B cell (primary cell): ENCODE measurements at regions of chr22 and their contacts with region 1.

Region 1: GRCh38 chr22:41940832-41941765 is 5.9 kb downstream of the CENPM start:
- DNase-seq: peak; percentile 92
- ATAC-seq: peak; percentile 48
- H3K4me3 ChIP-seq: peak overlapping the region in 1 of 5 experiments; percentile 21
- H3K4me3 Mint-ChIP-seq: peak overlapping the region; percentile 96
- H3K27ac ChIP-seq: peak overlapping the region; percentile 99
- H3K27ac Mint-ChIP-seq: peak overlapping the region; percentile 99
- H3K4me1 ChIP-seq: peaks cover 50 to 62% of the 10 kb centered on the region in 2 donors
- H3K4me1 Mint-ChIP-seq: peaks cover 55% of the 10 kb centered on the region
- H3K27me3 ChIP-seq: peaks cover 0 to 5% (median 0%) of the 10 kb centered on the region in 4 experiments
- H3K27me3 Mint-ChIP-seq: no peaks in the 10 kb centered on the region
- CTCF ChIP-seq: peak; percentile 93

Region 2: DNA sequence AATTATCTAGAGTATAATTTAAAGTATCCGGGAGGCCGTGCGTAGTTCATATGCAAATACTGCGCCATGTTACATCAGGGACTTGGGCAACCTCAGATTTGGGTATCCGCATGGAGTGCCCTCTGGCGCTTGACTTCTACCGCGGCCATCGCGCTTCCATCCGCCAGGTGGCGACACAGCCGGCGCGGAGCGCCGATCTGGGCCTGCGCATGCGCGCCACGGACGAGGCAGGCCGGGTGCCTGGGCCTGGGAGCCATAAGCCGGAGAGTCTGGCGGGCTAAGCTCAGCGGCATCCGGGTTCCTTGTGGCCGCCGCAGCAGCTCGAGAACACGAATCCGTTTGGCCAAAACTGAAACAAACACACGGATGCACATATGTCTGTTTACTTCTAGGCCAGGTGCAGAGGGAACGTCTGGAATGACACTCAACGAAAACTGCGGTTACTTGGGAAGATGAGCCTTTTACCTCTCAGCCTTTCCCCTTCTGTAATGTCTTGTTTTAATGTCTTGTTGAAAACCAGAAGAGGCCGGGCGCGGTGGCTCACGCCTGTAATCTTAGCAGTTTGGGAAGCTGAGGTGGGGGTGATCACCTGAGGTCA is 274.3 kb before region 1 on chr22:
- CTCF ChIA-PET with region 1: interaction called, 11 read pairs
- POLR2A ChIA-PET with region 1: interaction called, 6 read pairs
- intact Hi-C with region 1: no loop called
- DNase-seq: peak; percentile 95
- ATAC-seq: peak; percentile 96
- H3K4me3 ChIP-seq: peak overlapping the region in 4 of 5 experiments; percentile 24 to 64 (median 44)
- H3K4me3 Mint-ChIP-seq: peak overlapping the region; percentile 90
- H3K27ac ChIP-seq: peak overlapping the region; percentile 69 to 71
- H3K27ac Mint-ChIP-seq: peak overlapping the region; percentile 98
- H3K4me1 ChIP-seq: peaks cover 0 to 13% of the 10 kb centered on the region in 2 donors
- H3K4me1 Mint-ChIP-seq: peaks cover 7% of the 10 kb centered on the region
- H3K27me3 ChIP-seq: no peaks in the 10 kb centered on the region
- H3K27me3 Mint-ChIP-seq: no peaks in the 10 kb centered on the region
- CTCF ChIP-seq: peak; percentile 98

Region 3: DNA sequence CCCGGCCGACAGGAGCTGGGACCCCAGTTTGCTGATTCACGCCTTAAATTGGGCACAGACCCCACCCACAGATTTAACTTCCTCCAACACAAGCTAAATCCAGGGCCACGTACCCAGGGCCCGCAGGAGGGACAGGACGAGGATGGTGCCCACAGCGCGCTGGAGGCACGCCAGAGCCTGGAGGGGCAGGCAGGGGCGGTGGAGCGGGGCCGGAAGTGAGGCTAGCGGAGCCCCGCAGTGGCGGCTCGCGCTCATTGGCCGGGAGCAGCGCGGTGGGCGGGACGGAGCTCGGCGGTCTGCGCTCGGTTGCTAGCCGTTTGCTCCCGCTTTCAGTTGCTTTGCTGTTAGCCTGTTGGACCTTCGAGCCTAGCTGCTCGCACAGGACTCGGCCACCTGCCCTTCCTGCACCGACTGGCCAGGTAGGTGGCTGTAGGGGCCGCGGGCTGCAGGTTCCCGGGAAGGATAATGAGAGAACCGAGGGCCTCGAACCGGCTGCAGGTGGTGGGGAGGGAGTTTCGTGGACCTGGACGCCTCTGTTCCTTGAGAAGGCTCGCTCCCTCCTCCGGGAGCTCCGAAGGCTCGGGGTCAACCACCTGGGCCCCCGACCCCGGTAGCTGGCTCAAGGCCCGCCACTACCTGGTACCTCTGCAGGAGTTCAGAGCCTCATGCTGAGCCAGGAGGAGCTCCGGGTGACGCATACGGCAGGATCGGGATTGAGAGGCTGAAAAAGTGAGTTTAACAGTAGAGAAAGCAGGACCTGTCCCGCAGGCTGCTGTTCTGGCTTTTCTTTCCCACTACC is 140.6 kb before region 1 on chr22 and contains the start of gene CCDC134:
- CTCF ChIA-PET with region 1: interaction called, 13 read pairs
- POLR2A ChIA-PET with region 1: interaction called, 9 read pairs
- intact Hi-C with region 1: loop called (anchors 1 kb)
- DNase-seq: peak; percentile 91
- ATAC-seq: peak; percentile 98
- H3K4me3 ChIP-seq: peak within 1 kb of the TSS; percentile 65 to 98 (median 96)
- H3K4me3 Mint-ChIP-seq: peak within 1 kb of the TSS; percentile 98
- H3K27ac ChIP-seq: peak within 1 kb of the TSS; percentile 90 to 91
- H3K27ac Mint-ChIP-seq: peak within 1 kb of the TSS; percentile 99
- H3K4me1 ChIP-seq: peaks cover 19 to 22% of the 10 kb centered on the region in 2 donors
- H3K4me1 Mint-ChIP-seq: peaks cover 24% of the 10 kb centered on the region
- H3K27me3 ChIP-seq: no peaks in the 10 kb centered on the region
- H3K27me3 Mint-ChIP-seq: no peaks in the 10 kb centered on the region
- CTCF ChIP-seq: no peak
- total RNA-seq, gene CCDC134: 17.4 and 18.1 TPM in 2 replicates

Region 4: DNA sequence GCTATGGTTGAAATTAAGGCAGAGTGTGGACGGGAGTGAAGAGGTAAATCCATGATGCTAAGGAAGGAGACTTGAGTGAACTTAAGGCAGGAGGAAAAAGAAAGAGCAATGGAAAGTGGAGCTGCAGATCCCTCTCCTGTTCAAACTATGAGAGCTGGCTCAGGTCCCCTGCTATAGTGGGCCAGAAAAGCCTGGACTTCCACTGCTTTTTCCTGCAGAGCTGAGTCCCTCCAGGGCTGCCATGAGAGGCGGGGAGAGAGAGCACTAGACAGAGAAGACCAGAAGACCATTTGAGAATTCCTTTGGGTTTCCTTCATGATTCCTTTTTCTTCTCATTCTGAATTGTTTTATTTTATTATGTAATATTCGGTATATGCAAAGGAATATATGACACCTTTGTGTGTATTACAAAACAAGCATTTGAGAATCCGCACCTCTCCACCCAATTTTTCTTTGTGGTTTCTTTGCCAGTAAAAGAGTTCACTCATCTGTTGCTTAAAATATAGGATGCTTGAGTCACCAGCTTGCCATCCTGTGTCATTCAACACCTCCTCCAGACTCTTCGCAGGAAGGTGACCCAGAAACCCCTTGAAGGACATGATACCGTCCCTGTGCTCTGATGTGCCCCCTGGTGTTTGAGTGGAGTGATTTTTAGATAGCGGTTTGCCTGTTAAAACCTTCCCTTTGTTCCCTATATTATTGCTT is 83.8 kb before region 1 on chr22:
- CTCF ChIA-PET with region 1: interaction called, 23 read pairs
- POLR2A ChIA-PET with region 1: interaction called, 13 read pairs
- intact Hi-C with region 1: loop called (anchors 2 kb)
- DNase-seq: peak; percentile 75
- ATAC-seq: peak; percentile 25
- H3K4me3 ChIP-seq: no peak overlapping the region
- H3K4me3 Mint-ChIP-seq: peak overlapping the region; percentile 40
- H3K27ac ChIP-seq: peak overlapping the region; percentile 10 to 63
- H3K27ac Mint-ChIP-seq: peak overlapping the region; percentile 80
- H3K4me1 ChIP-seq: peaks cover 52 to 62% of the 10 kb centered on the region in 2 donors
- H3K4me1 Mint-ChIP-seq: peaks cover 67% of the 10 kb centered on the region
- H3K27me3 ChIP-seq: no peaks in the 10 kb centered on the region
- H3K27me3 Mint-ChIP-seq: no peaks in the 10 kb centered on the region
- CTCF ChIP-seq: peak; percentile 78

Region 5: DNA sequence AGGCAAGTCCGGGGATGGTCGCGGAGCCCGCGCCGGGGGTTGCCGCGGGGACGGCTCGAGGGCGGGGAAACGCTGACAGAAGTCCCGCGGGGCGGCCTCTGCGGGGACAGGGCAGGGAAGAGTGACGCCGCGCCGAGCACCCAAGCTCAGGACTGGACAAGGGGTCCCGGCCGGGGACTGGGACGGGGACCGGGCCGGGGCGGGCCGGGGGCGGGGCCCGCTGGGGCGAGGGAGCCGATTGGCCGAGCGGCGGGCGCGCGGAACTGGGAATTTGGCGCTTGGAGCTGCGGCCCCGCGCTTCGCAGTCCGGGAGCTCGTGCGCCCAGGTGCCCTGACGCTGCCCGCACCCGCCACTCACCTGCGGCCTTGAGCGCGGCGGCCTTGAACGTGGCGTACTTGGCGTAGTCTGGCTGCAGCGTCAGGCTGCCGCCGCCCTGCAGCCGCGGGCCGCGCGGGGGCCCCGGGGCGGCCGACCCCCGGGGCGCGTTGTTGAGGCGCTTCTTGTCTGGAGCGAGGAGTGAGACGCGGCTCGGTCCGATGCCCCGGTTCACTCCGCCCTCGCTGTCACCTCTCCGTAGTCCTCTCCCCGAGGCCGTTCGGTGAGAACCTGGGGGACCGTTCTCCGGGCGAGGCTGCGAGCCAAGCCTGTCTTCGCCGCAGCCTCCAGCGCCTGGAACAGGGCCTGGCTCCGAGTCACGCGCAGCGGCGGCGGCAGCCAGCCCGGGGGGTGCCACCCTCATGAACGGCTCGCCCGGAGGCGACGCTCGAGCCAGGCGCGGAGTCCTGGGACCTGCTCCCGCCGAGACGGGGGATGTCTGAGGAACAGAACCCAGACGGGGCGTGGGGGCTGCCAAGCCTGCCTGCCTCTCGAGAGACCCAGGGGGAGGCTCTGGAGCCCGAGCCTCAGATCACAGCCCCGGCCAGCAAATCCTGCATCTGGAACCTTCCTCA is 30.8 kb before region 1 on chr22:
- CTCF ChIA-PET with region 1: interaction called, 22 read pairs
- POLR2A ChIA-PET with region 1: interaction called, 960 read pairs
- intact Hi-C with region 1: loop called (anchors 5 kb)
- DNase-seq: peak; percentile 73
- ATAC-seq: peak; percentile 10
- H3K4me3 ChIP-seq: peak overlapping the region in 4 of 5 experiments; percentile 35 to 57 (median 50)
- H3K4me3 Mint-ChIP-seq: peak overlapping the region; percentile 83
- H3K27ac ChIP-seq: no peak overlapping the region
- H3K27ac Mint-ChIP-seq: peak overlapping the region; percentile 67
- H3K4me1 ChIP-seq: peaks cover 61% of the 10 kb centered on the region in 2 donors
- H3K4me1 Mint-ChIP-seq: peaks cover 51% of the 10 kb centered on the region
- H3K27me3 ChIP-seq: peaks cover 0 to 44% (median 21%) of the 10 kb centered on the region in 4 experiments
- H3K27me3 Mint-ChIP-seq: peaks cover 9% of the 10 kb centered on the region
- CTCF ChIP-seq: no peak

Region 6: GRCh38 chr22:41951898-41952474 is 10.9 kb after region 1 on chr22 and contains the start of gene SMIM45:
- CTCF ChIA-PET with region 1: interaction called, 17 read pairs
- POLR2A ChIA-PET with region 1: interaction called, 14 read pairs
- intact Hi-C with region 1: no loop called
- DNase-seq: peak; percentile 79
- ATAC-seq: peak; percentile 92
- H3K4me3 ChIP-seq: no peak within 1 kb of the TSS
- H3K4me3 Mint-ChIP-seq: peak within 1 kb of the TSS; percentile 32
- H3K27ac ChIP-seq: no peak within 1 kb of the TSS
- H3K27ac Mint-ChIP-seq: peak within 1 kb of the TSS; percentile 51
- H3K4me1 ChIP-seq: peaks cover 18 to 48% of the 10 kb centered on the region in 2 donors
- H3K4me1 Mint-ChIP-seq: peaks cover 48% of the 10 kb centered on the region
- H3K27me3 ChIP-seq: no peaks in the 10 kb centered on the region
- H3K27me3 Mint-ChIP-seq: no peaks in the 10 kb centered on the region
- CTCF ChIP-seq: peak; percentile 30

Region 7: GRCh38 chr22:42052765-42053164 is 111.7 kb after region 1 on chr22:
- CTCF ChIA-PET with region 1: no interaction called
- POLR2A ChIA-PET with region 1: no interaction called
- intact Hi-C with region 1: no loop called
- DNase-seq: no peak
- ATAC-seq: no peak
- H3K4me3 ChIP-seq: no peak overlapping the region
- H3K4me3 Mint-ChIP-seq: no peak overlapping the region
- H3K27ac ChIP-seq: no peak overlapping the region
- H3K27ac Mint-ChIP-seq: peak overlapping the region; percentile 47
- H3K4me1 ChIP-seq: no peaks in the 10 kb centered on the region
- H3K4me1 Mint-ChIP-seq: no peaks in the 10 kb centered on the region
- H3K27me3 ChIP-seq: no peaks in the 10 kb centered on the region
- H3K27me3 Mint-ChIP-seq: no peaks in the 10 kb centered on the region
- CTCF ChIP-seq: no peak